ENCODE measurements at regions of chr19 and their contacts with region 1.

Region 1: GRCh38 chr19:54024660-54025059 is 33.2 kb downstream of the CACNG6 start:
- DNase-seq: no peak
- H3K4me3 Mint-ChIP-seq: no peak overlapping the region
- H3K27ac Mint-ChIP-seq: no peak overlapping the region
- H3K4me1 Mint-ChIP-seq: peaks cover 12% of the 10 kb centered on the region
- H3K27me3 Mint-ChIP-seq: peaks cover 4% of the 10 kb centered on the region

Region 2: DNA sequence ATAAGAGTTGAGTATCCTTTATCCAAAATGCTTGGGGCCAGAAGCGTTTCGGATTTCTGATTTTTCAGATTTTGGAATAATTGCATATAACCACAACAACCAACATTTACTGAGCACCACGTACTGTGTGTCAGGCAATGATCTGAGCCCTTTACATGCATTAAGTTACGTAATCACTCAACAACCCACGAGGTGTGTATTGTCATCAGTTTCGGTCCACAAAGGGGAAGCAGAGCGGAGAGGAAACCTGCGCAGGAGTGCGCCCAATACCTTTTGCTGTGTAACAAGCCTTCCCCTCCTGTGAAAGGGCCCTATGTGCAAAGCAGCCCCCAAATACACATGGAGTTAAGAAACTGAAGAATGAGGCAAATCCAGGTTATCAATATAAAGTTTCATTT is 179.8 kb before region 1 on chr19:
- intact Hi-C with region 1: loop called (anchors 1 kb)
- DNase-seq: no peak
- H3K4me3 Mint-ChIP-seq: no peak overlapping the region
- H3K27ac Mint-ChIP-seq: no peak overlapping the region
- H3K4me1 Mint-ChIP-seq: peaks cover 5% of the 10 kb centered on the region
- H3K27me3 Mint-ChIP-seq: peaks cover 15% of the 10 kb centered on the region

Region 3: DNA sequence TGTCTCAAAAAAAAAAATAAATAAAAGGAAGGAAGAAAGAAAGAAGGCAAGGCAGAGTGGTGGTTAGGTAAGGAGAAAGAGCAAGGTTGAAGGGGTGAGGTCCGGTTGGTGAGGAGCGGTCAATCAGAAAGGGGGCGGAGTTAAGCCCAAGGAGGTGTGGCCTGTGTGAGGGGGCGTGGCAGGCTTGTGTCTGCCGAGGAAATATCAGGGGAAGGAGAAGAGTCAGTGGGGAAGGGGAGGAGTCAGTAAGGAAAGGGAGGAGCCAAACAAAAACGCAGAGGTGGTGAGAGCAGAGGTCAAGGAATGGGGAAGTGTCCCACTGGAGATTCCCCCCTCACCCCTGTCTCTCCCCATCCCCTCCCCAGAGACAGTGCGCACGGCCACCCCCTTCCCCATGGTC is 109.7 kb before region 1 on chr19:
- intact Hi-C with region 1: no loop called
- DNase-seq: no peak
- H3K4me3 Mint-ChIP-seq: no peak overlapping the region
- H3K27ac Mint-ChIP-seq: no peak overlapping the region
- H3K4me1 Mint-ChIP-seq: no peaks in the 10 kb centered on the region
- H3K27me3 Mint-ChIP-seq: peaks cover 14% of the 10 kb centered on the region